ENCODE measurements at regions of chr13 and their contacts with region 1.

Region 1: DNA sequence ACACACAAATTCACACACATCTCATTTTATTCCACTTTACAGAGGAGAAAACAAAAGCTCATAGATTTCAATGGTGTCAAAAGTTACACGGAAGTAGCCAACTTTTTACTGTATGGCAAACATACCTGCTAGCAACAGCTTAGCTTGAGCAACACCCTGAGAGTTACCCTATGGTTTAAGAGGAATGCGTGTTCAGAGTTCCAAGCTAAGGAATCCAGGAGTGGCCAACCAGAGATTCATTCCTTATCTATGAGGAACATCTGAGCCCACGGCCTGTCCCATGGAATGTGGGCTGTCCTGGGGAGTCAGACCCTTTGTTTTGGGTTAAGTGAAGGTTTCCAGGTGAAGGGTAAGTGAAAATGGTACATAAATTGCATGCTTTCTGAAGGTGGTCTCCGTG is 67.6 kb downstream of the STARD13 start:
- DNase-seq: no peak
- H3K4me3 ChIP-seq: no peak overlapping the region
- CTCF ChIP-seq: no peak

Region 2: DNA sequence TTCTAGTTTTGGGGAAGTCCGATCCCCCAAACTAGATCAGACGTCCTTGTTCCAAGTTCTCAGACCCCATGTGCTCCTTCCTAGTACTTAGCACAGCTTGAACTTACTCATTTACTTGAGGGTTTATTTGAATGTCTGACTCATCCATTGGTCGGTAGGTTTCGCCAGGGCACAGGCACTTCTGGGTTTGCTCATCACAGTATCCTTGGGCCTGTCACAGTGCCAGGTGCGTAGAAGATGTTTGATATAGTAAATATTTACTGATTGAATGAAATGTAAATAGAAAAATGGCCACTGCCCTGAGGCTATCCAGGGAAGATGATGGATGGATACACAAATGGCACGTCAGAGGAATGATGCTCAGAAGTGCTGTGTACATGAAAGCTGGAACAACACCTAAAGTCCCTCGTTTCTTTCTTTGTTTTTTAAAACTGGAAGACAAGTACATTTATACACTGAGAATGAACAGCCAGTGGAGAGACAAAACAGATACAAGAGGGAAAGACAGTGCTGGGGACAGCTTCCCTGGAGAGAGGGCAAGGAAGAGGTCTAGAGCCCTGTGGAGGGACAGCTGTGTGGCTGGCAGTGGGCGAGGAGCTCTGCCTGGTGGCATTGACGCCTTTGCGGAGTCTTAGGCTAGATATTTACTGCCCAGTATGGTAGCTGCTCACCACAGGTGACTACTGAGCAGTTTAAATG is 233.0 kb before region 1 on chr13:
- CTCF ChIA-PET with region 1: no interaction called
- POLR2A ChIA-PET with region 1: no interaction called
- DNase-seq: no peak
- H3K4me3 ChIP-seq: no peak overlapping the region
- CTCF ChIP-seq: no peak

Region 3: DNA sequence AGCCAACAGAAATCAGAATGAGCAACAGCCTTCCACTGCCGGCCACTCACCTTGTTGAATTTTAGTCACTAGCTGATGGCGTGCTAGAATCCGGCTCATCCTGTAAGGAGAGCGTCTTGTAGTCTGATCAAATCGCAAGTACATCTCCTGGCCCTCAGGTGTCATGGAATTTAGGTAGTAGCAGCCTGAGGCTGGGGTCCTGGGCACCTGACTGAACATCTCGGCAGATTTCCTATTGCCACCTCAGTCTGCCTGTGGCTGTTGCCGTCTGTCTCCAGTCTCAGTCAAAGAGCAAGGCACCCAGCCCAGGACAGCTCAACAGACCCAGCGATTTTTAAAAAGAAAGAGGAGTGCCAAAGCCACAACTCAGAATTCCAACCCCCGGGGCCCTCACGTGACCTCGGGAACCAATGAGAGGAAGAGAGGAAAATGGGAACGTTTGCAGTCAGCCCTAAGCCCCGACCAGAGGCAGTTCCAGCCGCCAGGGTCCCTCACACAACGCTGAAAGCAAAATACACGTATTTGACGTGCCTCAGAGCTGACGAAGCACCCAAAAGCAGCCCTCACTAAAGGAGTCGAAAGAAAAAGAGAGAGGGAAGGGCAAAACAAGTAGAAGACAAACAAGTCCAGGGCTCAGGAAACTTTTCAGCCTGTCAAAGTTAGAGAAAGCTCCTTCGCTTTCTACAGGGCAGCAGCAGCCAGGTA is 67.6 kb after region 1 on chr13 and contains the start of gene STARD13:
- CTCF ChIA-PET with region 1: interaction called, 3 read pairs
- POLR2A ChIA-PET with region 1: interaction called, 13 read pairs
- DNase-seq: peak; percentile 94
- H3K4me3 ChIP-seq: peak within 1 kb of the TSS; percentile 95
- CTCF ChIP-seq: peak; percentile 56

Region 4: GRCh38 chr13:33322543-33322809 is 104.5 kb after region 1 on chr13:
- CTCF ChIA-PET with region 1: no interaction called
- POLR2A ChIA-PET with region 1: no interaction called
- DNase-seq: no peak
- H3K4me3 ChIP-seq: no peak overlapping the region
- CTCF ChIP-seq: no peak

Region 5: GRCh38 chr13:33542283-33543088 is 324.5 kb after region 1 on chr13:
- CTCF ChIA-PET with region 1: interaction called, 10 read pairs
- POLR2A ChIA-PET with region 1: no interaction called
- DNase-seq: peak; percentile 96
- H3K4me3 ChIP-seq: peak overlapping the region; percentile 59
- CTCF ChIP-seq: peak; percentile 95

Measured in AG04449 (cell line).